PC-9 (cell line): ENCODE measurements at regions of chrX and their contacts with region 1.

Region 1: DNA sequence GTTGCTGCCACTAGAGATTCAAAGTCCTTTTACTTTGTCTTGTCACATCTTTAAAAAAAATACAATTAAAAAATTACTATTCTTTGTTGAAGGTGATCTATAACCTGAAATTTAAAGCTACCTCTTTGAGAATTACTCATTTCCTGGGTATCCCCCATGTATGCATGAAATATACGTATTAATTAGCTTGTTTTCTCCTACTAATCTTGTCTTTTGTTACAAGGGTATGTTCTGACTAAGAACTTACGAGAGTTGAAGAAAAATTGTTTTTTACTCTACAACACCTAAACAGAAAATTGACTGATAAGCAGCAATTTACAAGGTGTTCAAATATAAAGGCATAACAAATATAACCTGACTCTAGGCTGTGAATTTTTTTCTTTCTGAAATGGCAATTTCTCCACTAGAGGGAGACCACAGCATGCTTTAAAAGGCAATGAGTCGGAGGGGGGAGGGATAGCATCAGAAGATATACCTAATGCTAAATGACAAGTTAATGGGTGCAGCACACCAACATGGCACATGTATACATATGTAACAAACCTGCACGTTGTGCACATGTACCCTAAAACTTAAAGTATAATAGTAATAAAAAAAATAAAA is 249.6 kb downstream of the OPHN1 start:
- DNase-seq: no peak
- H3K4me3 ChIP-seq: no peak overlapping the region
- H3K27ac ChIP-seq: no peak overlapping the region
- H3K4me1 ChIP-seq: peaks cover 19% of the 10 kb centered on the region
- H3K27me3 ChIP-seq: no peaks in the 10 kb centered on the region
- CTCF ChIP-seq: peak; percentile 74

Region 2: GRCh38 chrX:68710870-68711576 is 527.3 kb after region 1 on chrX:
- CTCF ChIA-PET with region 1: no interaction called
- POLR2A ChIA-PET with region 1: no interaction called
- intact Hi-C with region 1: loop called (anchors 5 kb)
- DNase-seq: peak; percentile 50 to 52
- H3K4me3 ChIP-seq: no peak overlapping the region
- H3K27ac ChIP-seq: no peak overlapping the region
- H3K4me1 ChIP-seq: no peaks in the 10 kb centered on the region
- H3K27me3 ChIP-seq: no peaks in the 10 kb centered on the region
- CTCF ChIP-seq: peak; percentile 80

Region 3: GRCh38 chrX:68822641-68823410 is 639.1 kb after region 1 on chrX:
- CTCF ChIA-PET with region 1: no interaction called
- POLR2A ChIA-PET with region 1: no interaction called
- intact Hi-C with region 1: loop called (anchors 5 kb)
- DNase-seq: no peak
- H3K4me3 ChIP-seq: no peak overlapping the region
- H3K27ac ChIP-seq: no peak overlapping the region
- H3K4me1 ChIP-seq: no peaks in the 10 kb centered on the region
- H3K27me3 ChIP-seq: no peaks in the 10 kb centered on the region
- CTCF ChIP-seq: peak; percentile 54